Activated CD4-positive, alpha-beta T cell treated with anti-CD3 and anti-CD28 coated beads for 36 hours (primary cell): ENCODE measurements at regions of chr13 and their contacts with region 1.

Region 1: GRCh38 chr13:40517486-40518480 is 148.7 kb downstream of the FOXO1 start:
- DNase-seq: peak; percentile 54
- ATAC-seq: peak; percentile 71
- H3K4me3 Mint-ChIP-seq: peak overlapping the region; percentile 44
- H3K27ac Mint-ChIP-seq: peak overlapping the region; percentile 91
- H3K4me1 Mint-ChIP-seq: peaks cover 84% of the 10 kb centered on the region
- H3K27me3 Mint-ChIP-seq: no peaks in the 10 kb centered on the region

Region 2: DNA sequence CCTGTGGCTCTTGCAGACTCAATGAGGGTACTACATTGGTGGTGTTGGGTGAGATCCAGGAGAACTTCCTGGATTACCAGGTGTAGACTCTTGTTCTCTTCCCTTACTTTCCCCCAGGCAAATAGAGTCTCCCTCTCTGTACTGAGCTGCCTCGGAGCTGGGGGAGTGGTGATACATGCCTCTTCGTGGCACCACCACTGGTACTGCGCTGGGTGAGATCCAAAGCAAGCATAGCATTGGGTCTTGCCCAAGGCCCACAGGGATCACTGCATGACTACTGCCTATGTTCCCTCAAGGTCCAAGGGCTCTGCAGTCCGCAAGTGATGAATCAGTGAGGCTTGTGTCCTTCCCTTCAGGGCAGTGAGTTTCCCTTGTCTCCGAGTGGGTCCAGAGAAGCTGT is 780.7 kb before region 1 on chr13:
- CTCF ChIA-PET with region 1: no interaction called
- POLR2A ChIA-PET with region 1: no interaction called
- intact Hi-C with region 1: no loop called
- DNase-seq: no peak
- ATAC-seq: no peak
- H3K4me3 Mint-ChIP-seq: no peak overlapping the region
- H3K27ac Mint-ChIP-seq: no peak overlapping the region
- H3K4me1 Mint-ChIP-seq: no peaks in the 10 kb centered on the region
- H3K27me3 Mint-ChIP-seq: no peaks in the 10 kb centered on the region

Region 3: GRCh38 chr13:40149611-40150274 is 368.0 kb before region 1 on chr13:
- CTCF ChIA-PET with region 1: no interaction called
- POLR2A ChIA-PET with region 1: interaction called, 3 read pairs
- intact Hi-C with region 1: loop called in 1 of 2 experiments (anchors 5 kb)
- DNase-seq: peak; percentile 33
- ATAC-seq: peak; percentile 9
- H3K4me3 Mint-ChIP-seq: no peak overlapping the region
- H3K27ac Mint-ChIP-seq: peak overlapping the region; percentile 66
- H3K4me1 Mint-ChIP-seq: peaks cover 72% of the 10 kb centered on the region
- H3K27me3 Mint-ChIP-seq: no peaks in the 10 kb centered on the region

Region 4: DNA sequence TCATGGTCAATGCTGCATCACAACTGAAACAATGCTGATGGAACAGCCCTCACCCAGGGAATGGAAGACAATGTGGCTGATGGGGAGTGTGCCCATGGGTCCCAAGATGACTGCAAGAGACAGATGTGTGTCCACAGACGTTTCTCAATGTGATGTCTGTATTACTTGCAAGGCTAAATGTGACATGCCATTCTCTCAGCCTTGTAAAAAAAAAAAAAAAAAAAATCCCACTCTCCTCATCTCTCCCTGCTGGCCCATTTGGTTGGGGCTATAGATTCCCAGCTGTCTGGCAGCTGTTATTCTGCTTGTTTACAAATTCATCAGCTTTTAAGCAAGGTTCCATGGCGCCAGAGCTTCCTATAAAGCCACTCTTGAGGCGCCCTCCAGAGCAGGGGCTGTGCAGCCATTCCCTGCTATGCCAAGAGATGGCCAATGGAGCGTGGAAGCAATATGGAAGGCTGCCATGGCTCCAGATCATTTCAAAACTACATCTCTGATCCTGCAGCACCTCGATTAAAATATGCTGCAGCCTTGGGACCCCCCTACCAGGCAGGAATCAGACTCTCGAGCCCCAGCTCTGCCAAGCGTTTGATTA is 146.2 kb before region 1 on chr13:
- CTCF ChIA-PET with region 1: no interaction called
- POLR2A ChIA-PET with region 1: no interaction called
- intact Hi-C with region 1: loop called in 1 of 2 experiments (anchors 5 kb)
- DNase-seq: no peak
- ATAC-seq: no peak
- H3K4me3 Mint-ChIP-seq: no peak overlapping the region
- H3K27ac Mint-ChIP-seq: peak overlapping the region; percentile 61
- H3K4me1 Mint-ChIP-seq: peaks cover 42% of the 10 kb centered on the region
- H3K27me3 Mint-ChIP-seq: no peaks in the 10 kb centered on the region

Region 5: DNA sequence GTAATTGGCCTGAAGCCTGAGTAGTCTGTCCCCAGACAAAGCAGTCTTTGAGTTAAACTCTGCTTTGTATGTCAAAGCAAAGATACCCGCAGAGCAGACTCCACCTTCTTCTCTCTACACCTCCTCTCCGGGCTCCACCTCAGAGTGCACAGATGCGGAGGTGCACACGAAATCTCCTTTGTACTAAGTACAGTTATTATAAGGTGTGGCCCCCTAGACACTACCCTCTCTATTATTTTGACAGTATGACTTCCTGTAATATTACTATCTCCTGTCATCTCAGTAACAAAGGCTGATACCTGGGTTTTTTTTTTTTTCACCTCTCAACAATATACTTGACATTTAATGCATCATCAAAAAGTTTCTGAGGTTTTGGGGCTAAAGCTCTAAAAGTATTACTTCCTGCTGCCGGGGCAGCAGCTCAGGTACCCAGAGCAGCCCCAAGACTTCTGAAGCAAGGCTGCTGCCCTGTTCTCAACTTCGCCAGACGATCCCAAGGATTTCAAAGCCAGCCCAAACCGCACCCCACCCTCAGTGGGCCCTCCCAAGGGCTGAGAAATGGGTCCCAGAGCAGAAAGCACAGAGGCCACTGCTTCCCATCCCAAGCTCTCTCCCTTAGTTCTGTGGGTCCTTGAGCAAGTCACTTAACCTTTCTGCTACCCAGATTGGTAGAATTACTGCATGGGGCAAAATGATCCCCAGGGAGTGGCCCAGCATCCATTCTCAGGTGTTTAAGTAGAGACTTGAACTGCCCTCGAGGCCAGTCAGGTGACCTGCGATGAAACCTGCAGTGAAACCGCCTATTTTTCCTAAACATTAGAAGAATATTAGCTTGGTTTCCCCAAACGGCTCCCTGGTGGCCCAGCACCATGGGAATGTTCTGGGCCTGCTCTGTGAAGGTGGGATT is 31.9 kb before region 1 on chr13:
- CTCF ChIA-PET with region 1: interaction called, 4 read pairs
- POLR2A ChIA-PET with region 1: interaction called, 6 read pairs
- intact Hi-C with region 1: loop called (anchors 1 kb)
- DNase-seq: peak; percentile 80
- ATAC-seq: peak; percentile 94
- H3K4me3 Mint-ChIP-seq: peak overlapping the region; percentile 20
- H3K27ac Mint-ChIP-seq: peak overlapping the region; percentile 93
- H3K4me1 Mint-ChIP-seq: peaks cover 86% of the 10 kb centered on the region
- H3K27me3 Mint-ChIP-seq: no peaks in the 10 kb centered on the region

Region 6: GRCh38 chr13:40550130-40550529 is 32.3 kb after region 1 on chr13:
- CTCF ChIA-PET with region 1: no interaction called
- POLR2A ChIA-PET with region 1: no interaction called
- intact Hi-C with region 1: no loop called
- DNase-seq: no peak
- ATAC-seq: peak; percentile 19
- H3K4me3 Mint-ChIP-seq: no peak overlapping the region
- H3K27ac Mint-ChIP-seq: no peak overlapping the region
- H3K4me1 Mint-ChIP-seq: peaks cover 48% of the 10 kb centered on the region
- H3K27me3 Mint-ChIP-seq: no peaks in the 10 kb centered on the region

Region 7: DNA sequence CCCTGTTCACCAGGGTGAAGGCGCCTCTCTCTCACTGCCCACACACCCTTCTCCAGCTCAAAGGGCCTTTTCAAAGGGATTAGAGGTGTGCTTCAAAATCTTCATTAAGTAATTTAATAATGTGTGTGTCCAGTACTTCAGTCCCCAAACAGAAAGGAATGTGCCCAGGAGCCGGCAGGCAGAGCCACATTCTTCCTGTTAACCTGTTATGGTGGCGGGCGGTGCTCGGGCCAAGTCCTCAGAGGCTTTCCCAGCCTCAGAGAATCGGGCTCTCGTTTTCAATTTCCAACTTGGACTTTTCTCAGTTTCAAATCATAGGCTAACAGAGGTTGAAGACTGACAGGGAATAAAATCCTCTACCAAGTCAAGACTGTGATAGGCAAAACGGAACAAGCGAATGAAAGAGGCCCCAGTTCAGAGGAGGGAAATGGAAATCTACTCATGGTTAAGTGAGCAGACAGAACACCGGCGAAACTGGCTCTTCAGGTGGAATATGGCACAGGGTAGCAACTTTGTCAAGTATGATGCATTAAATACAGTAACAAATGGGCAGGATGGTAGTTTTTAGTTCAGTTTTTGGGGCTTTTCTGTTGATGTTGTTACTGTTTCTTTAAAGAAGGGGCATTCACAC is 80.1 kb after region 1 on chr13:
- CTCF ChIA-PET with region 1: no interaction called
- POLR2A ChIA-PET with region 1: no interaction called
- intact Hi-C with region 1: loop called in 1 of 2 experiments (anchors 5 kb)
- DNase-seq: no peak
- ATAC-seq: no peak
- H3K4me3 Mint-ChIP-seq: peak overlapping the region; percentile 57
- H3K27ac Mint-ChIP-seq: peak overlapping the region; percentile 89
- H3K4me1 Mint-ChIP-seq: peaks cover 92% of the 10 kb centered on the region
- H3K27me3 Mint-ChIP-seq: no peaks in the 10 kb centered on the region